Right cardiac atrium (tissue), 5 donors: ENCODE measurements at regions of chr1 and their contacts with region 1.

Region 1: DNA sequence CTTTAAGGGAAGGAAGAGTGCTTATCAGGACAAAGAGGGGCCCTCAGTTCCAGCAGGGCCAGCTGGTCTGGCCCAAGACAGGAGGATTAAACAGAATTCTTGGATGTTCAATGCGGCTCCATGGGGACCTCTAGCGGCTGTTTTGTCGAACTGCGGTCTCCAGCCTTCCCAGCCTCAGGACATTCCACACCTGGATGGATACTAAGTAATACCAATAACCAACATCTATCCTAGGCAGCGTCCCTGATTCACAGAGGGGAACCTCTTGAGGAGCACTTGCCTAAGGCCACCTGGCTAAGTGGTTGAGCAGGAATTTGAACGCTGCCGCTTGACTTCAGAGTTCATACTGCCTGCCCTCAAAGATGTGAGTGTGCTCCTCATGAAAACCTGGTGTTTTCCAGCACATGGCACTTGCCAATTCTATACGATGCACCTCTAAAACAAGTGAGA is 15.5 kb upstream of the CD247 start:
- DNase-seq: peak; percentile 57 to 80 (median 71)
- ATAC-seq: peak; percentile 73 to 88
- H3K4me3 ChIP-seq: no peak overlapping the region
- H3K27ac ChIP-seq: no peak overlapping the region
- H3K4me1 ChIP-seq: peaks cover 2% of the 10 kb centered on the region
- H3K27me3 ChIP-seq: no peaks in the 10 kb centered on the region

Region 2: GRCh38 chr1:166884040-166884642 is 649.7 kb before region 1 on chr1:
- intact Hi-C with region 1: loop called in 1 of 4 experiments (anchors 10 kb)
- DNase-seq: peak; percentile 37 to 77 (median 69)
- ATAC-seq: peak; percentile 80 to 81
- H3K4me3 ChIP-seq: no peak overlapping the region
- H3K27ac ChIP-seq: no peak overlapping the region
- H3K4me1 ChIP-seq: no peaks in the 10 kb centered on the region
- H3K27me3 ChIP-seq: no peaks in the 10 kb centered on the region

Region 3: DNA sequence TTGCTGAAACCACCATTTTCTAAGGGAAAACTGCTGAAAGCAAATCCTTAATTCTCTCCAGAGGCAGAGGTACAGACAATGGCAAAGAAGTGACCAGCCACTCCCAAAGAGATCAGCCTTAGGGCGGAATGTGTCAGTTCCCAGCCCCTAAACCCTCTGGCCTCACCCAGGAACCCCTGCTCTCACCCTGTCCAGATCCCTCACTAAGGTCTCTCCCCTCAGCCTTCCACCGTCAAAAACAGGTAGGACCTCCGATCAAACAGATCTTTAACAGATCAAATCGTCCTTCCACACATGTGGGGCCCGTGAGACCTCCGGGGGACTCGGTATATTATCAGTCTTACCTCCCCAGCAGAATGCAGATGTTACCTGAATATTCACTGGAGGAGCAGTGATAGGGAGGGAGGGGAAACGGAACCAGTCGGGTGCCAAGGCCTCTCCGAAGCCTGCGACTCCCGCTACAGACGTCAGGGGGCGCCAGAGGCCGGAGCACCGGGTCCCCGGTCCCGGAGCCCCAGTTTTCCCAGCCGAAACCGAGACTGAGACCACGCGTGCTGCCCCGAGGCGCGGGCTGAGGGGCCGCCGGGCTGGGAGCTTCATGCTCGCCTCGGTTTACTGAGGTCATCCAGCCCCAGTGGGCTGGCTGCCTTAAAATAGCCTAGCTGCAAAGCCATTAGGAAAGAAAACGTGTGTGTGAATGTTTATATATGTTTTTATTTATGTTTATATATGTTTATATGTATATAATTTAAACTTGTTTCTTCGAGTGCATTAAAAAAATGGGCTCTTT is 467.3 kb before region 1 on chr1:
- intact Hi-C with region 1: loop called (anchors 5 to 10 kb)
- DNase-seq: peak; percentile 72 to 91 (median 89)
- ATAC-seq: peak; percentile 82 to 90
- H3K4me3 ChIP-seq: no peak overlapping the region
- H3K27ac ChIP-seq: no peak overlapping the region
- H3K4me1 ChIP-seq: no peaks in the 10 kb centered on the region
- H3K27me3 ChIP-seq: no peaks in the 10 kb centered on the region

Region 4: DNA sequence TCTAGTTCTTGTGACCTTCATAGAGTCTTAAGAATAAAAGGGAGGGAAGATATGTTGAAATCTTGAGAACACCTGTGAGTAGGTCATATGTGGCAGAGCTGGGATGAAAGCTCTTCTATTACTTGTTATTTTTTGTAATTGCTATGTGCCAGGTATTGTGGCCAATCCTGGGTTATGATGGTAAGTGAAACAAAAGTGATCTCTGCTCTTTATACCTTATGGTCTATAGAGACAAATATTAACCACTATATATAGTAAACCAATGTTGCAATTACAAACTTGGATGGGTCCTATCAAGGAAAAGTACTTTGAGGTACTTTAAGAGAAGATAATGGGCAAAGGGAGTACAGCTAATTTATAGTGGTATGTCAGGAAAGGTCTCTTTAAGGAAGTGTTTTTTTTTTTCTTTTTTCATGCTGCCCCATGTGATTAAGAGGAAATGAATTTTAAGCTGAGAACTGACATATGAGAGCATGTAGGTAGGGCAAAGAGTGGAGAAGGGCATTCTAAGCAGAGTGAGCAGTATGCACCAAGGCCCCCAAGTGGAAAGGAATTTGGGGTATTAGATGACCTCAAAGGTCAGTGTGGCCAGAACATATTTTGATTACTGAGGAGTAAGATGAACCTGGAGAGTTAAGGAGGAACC is 269.9 kb before region 1 on chr1:
- intact Hi-C with region 1: loop called in 1 of 4 experiments (anchors 10 kb)
- DNase-seq: no peak
- ATAC-seq: no peak
- H3K4me3 ChIP-seq: no peak overlapping the region
- H3K27ac ChIP-seq: no peak overlapping the region
- H3K4me1 ChIP-seq: peaks cover 12% of the 10 kb centered on the region
- H3K27me3 ChIP-seq: no peaks in the 10 kb centered on the region

Region 5: DNA sequence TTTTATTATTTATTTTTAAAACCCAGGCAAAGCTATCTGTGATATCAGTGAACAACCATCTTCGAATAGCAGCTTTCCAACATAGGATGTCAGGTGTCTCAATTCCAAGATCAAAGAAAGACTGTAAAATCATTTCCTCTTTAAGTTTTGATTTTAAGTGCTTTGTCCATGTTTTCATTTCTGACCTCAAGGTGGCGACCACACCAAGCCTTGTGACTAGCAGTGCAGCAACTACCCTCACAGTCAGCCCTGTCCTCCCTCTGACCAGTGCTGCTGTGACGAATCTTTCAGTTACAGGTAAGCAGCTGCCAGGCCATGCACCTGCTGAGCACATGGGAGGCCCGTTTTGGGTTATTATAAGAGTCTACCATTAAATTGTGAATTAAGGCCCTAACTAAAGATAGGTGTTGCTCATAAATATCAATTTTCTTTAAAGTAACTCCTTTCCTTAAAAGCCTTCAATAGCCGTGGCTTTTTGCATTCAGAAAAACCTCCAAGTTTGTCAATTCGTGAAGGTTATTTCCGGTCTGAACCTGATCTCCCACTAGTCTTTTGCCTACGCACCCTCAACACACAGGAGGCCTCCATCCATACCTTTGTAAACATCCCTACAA is 132.5 kb before region 1 on chr1:
- intact Hi-C with region 1: loop called in 2 of 4 experiments (anchors 10 kb)
- DNase-seq: peak in 2 of 3 donors; percentile 23 to 68
- ATAC-seq: peak; percentile 66 to 72
- H3K4me3 ChIP-seq: no peak overlapping the region
- H3K27ac ChIP-seq: no peak overlapping the region
- H3K4me1 ChIP-seq: no peaks in the 10 kb centered on the region
- H3K27me3 ChIP-seq: no peaks in the 10 kb centered on the region

Region 6: DNA sequence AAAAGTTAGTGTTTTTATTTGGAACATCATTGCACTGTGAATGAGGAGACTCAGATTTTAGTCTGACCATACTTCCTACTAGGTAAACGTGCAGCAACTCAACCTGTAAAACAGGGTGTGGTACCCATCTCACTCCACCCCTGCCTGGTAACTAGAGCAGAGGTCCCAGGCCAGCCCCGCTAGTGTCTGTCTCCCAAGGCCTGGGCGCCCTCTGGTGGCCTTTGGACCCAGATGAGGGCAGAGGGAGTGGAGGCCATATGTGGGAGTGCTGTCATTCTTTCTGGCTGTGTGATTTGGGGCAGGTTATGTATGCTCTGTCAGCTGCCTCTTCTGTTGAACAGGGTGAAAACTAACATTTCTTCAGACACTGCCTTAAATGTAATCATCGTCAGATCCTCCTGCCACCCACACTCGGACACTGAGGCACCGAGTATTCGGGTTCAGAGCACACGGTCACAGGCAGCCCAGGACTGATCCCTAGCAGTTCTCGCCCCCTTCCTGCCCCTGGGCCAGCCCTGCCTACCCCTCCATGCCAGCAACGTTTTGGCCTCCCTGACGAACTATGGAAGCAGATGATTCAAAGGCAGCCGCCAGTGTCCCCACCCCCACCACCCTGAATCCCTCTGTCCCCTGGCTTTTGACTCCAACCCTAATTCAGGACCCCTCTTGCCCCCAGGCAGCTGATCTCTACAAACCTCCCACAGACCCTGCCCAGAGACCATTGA is 91.6 kb before region 1 on chr1:
- intact Hi-C with region 1: loop called in 1 of 4 experiments (anchors 10 kb)
- DNase-seq: peak; percentile 86 to 96 (median 93)
- ATAC-seq: peak; percentile 91 to 93
- H3K4me3 ChIP-seq: no peak overlapping the region
- H3K27ac ChIP-seq: no peak overlapping the region
- H3K4me1 ChIP-seq: no peaks in the 10 kb centered on the region
- H3K27me3 ChIP-seq: no peaks in the 10 kb centered on the region

Region 7: GRCh38 chr1:167454894-167455785 is 78.7 kb before region 1 on chr1:
- intact Hi-C with region 1: loop called in 1 of 4 experiments (anchors 10 kb)
- DNase-seq: peak; percentile 62 to 86 (median 85)
- ATAC-seq: peak; percentile 92 to 93
- H3K4me3 ChIP-seq: peak overlapping the region; percentile 72
- H3K27ac ChIP-seq: peak overlapping the region; percentile 68
- H3K4me1 ChIP-seq: no peaks in the 10 kb centered on the region
- H3K27me3 ChIP-seq: no peaks in the 10 kb centered on the region